Breast epithelium (tissue), 4 donors: ENCODE measurements at regions of chr18 and their contacts with region 1.

Region 1: GRCh38 chr18:69330370-69331005 is 70.2 kb upstream of the DOK6 start:
- DNase-seq: no peak
- H3K4me3 ChIP-seq: no peak overlapping the region
- H3K27ac ChIP-seq: no peak overlapping the region
- H3K4me1 ChIP-seq: no peaks in the 10 kb centered on the region
- H3K27me3 ChIP-seq: no peaks in the 10 kb centered on the region
- CTCF ChIP-seq: no peak
- POLR2A ChIP-seq: no peak

Region 2: DNA sequence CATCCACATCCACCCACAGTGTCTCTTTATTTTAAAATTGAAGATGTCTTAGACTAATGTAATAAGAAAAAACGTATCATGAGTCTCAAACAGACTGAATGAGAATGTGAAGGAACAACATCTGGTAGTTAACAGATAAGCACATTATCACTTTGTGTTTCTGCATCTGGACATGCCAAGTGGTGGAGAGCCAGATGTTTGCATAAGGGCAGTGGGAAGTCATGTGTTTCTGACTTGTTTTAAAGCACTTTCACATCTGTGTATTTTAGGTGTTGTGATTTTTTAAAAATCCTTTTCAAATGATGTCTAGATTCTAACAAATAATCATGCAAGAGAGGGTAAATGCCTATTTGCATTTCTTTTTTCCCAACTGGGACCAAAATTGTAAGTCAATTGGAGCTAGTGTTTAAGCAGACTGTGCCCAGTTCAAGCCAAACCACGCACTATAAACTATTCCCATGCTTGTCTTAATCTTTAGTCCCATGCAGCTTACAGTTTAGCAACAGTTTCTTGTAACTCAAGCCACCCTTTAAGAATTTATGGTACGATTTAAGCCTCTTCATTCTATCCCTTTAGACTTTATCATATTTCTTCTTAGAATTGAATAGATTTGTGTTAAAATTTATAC is 202.5 kb before region 1 on chr18:
- intact Hi-C with region 1: loop called (anchors 5 kb)
- DNase-seq: no peak
- H3K4me3 ChIP-seq: no peak overlapping the region
- H3K27ac ChIP-seq: no peak overlapping the region
- H3K4me1 ChIP-seq: no peaks in the 10 kb centered on the region
- H3K27me3 ChIP-seq: no peaks in the 10 kb centered on the region
- CTCF ChIP-seq: no peak
- POLR2A ChIP-seq: no peak

Region 3: DNA sequence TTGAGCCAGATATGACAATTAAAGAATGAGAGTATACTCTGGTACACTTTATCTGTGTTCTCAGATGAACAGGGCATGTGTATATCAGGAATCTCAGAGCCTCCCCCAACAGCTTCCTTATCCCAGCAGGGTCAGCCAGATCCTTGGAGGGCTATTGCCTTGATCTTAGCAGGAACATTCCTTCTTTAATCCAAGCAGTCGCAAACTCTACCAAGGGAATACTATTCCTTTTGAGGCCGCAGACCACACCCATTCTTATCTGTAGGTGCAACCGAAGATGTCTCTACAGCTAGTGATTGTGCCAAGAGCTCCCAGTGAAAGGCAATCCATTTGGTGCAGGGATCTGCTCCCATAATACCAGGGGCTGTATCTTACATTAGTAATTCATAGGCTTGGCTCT is 48.1 kb before region 1 on chr18:
- intact Hi-C with region 1: loop called (anchors 5 kb)
- DNase-seq: no peak
- H3K4me3 ChIP-seq: no peak overlapping the region
- H3K27ac ChIP-seq: no peak overlapping the region
- H3K4me1 ChIP-seq: no peaks in the 10 kb centered on the region
- H3K27me3 ChIP-seq: no peaks in the 10 kb centered on the region
- CTCF ChIP-seq: no peak
- POLR2A ChIP-seq: no peak

Region 4: DNA sequence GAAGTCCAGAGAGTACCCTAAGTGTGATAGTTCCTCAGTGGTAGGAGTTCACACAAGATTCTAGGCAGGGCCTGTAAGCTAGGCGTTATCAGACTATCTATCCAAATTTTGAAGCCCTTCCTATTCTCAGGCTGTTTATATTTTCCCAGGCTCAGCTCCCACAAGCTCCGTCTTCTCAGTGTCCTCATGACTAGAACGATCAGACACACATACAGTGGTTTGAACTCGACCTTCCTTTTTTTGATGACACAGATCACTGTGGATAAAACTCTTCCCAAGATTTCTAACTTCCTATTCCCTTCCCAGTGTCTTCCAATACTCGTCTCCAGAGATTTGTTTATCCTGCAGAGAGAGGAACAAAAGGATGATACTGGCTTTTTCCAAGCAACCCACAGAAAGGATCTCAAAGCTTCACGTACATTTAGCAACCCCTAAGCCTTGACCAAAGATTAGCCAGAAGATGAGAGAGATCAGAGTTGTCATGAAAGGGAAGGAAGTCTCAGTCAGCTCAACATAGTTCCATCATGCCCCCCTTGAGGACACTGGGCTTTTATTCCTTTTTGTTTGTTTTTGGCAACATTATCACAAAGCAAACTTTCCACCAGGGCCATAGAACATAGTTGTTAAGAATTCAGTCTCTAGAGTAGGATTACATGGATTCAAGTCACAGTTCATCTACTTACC is 27.9 kb after region 1 on chr18:
- intact Hi-C with region 1: no loop called
- DNase-seq: no peak
- H3K4me3 ChIP-seq: no peak overlapping the region
- H3K27ac ChIP-seq: no peak overlapping the region
- H3K4me1 ChIP-seq: no peaks in the 10 kb centered on the region
- H3K27me3 ChIP-seq: no peaks in the 10 kb centered on the region
- CTCF ChIP-seq: no peak
- POLR2A ChIP-seq: no peak

Region 5: GRCh38 chr18:69727912-69728572 is 397.6 kb after region 1 on chr18:
- intact Hi-C with region 1: no loop called
- DNase-seq: no peak
- H3K4me3 ChIP-seq: no peak overlapping the region
- H3K27ac ChIP-seq: no peak overlapping the region
- H3K4me1 ChIP-seq: no peaks in the 10 kb centered on the region
- H3K27me3 ChIP-seq: no peaks in the 10 kb centered on the region
- CTCF ChIP-seq: no peak
- POLR2A ChIP-seq: no peak

Region 6: GRCh38 chr18:70553245-70553935 is 1222.9 kb after region 1 on chr18:
- intact Hi-C with region 1: no loop called
- DNase-seq: no peak
- H3K4me3 ChIP-seq: no peak overlapping the region
- H3K27ac ChIP-seq: no peak overlapping the region
- H3K4me1 ChIP-seq: no peaks in the 10 kb centered on the region
- H3K27me3 ChIP-seq: no peaks in the 10 kb centered on the region
- CTCF ChIP-seq: no peak
- POLR2A ChIP-seq: no peak